IMR-90 (cell line): ENCODE measurements at regions of chr9 and their contacts with region 1.

Region 1: GRCh38 chr9:127214421-127215267 is 49.9 kb upstream of the GARNL3 start:
- DNase-seq: peak; percentile 89
- ATAC-seq: peak; percentile 83
- H3K4me3 ChIP-seq: no peak overlapping the region
- H3K27ac ChIP-seq: no peak overlapping the region
- H3K4me1 ChIP-seq: peaks cover 6% of the 10 kb centered on the region; the same call in 1 of the 2 replicates
- H3K27me3 ChIP-seq: peaks cover 8% of the 10 kb centered on the region
- CTCF ChIP-seq: peak; percentile 72
- POLR2A ChIP-seq: no peak
- RAD21 ChIP-seq: peak; percentile 78

Region 2: GRCh38 chr9:127388037-127388855 is 173.6 kb after region 1 on chr9:
- CTCF ChIA-PET with region 1: no interaction called
- POLR2A ChIA-PET with region 1: no interaction called
- dilution Hi-C with region 1: no loop called
- in situ Hi-C with region 1: no loop called
- intact Hi-C with region 1: loop called (anchors 2 kb)
- DNase-seq: peak; percentile 98
- ATAC-seq: peak; percentile 100
- H3K4me3 ChIP-seq: no peak overlapping the region
- H3K27ac ChIP-seq: peak overlapping the region; percentile 83; the same call in 1 of the 2 replicates
- H3K4me1 ChIP-seq: peaks cover 5% of the 10 kb centered on the region
- H3K27me3 ChIP-seq: peaks cover 22% of the 10 kb centered on the region
- CTCF ChIP-seq: no peak
- POLR2A ChIP-seq: no peak
- RAD21 ChIP-seq: 0 out of 2 replicates have a peak, but pooled peaks have one; percentile 5